Cardiac septum (tissue), 1 donor: ENCODE measurements at regions of chr13 and their contacts with region 1.

Region 1: GRCh38 chr13:94558716-94559115 is 37.2 kb downstream of the TGDS start:
- DNase-seq: no peak

Region 2: DNA sequence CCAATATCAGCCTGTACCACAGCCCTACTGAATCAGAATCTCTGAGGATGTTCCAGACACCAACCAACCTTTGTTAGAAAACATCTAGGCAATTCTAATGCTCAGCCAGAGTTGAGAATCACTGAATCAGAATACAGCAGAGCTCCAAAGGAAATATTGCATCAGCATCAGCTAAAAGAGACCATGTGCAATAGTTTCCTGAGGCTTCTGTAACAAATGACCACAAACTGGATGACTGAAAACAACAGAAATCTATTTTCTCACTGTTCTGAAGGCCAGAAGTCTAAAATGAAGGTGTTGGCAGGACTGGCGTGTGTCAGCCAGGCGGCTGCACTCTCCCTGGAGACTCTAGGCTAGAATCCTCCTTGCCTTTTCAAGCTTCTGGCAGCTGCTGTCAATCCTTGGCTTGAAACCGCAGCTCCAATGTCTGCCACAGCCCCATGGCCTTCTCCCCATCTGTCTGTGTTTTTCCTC is 78.0 kb before region 1 on chr13:
- intact Hi-C with region 1: loop called (anchors 5 kb)
- DNase-seq: no peak